ENCODE measurements at regions of chr2 and their contacts with region 1.

Region 1: DNA sequence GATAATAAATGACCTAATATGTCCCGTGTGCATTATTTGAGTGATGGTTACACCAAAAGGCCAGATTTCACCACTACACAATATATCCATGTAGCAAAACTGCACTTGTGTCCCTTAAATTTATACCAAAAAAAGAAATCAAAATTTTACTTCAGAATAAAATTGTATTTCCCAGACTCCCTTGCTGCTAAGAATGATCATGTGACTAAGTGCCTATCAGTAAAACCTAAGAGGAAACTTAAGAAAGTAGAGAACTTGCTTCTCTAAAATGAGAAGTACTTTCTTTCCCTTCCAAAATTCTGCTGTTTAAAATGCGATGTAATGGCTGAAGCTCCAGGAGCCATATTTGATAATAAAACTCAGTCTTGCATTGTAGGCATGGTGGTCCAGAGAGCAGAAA is 24.0 kb downstream of the PROKR1 start:
- DNase-seq: no peak
- H3K4me3 ChIP-seq: no peak overlapping the region
- H3K27ac ChIP-seq: no peak overlapping the region
- H3K4me1 ChIP-seq: no peaks in the 10 kb centered on the region
- H3K27me3 ChIP-seq: no peaks in the 10 kb centered on the region
- CTCF ChIP-seq: no peak
- POLR2A ChIP-seq: no peak

Region 2: DNA sequence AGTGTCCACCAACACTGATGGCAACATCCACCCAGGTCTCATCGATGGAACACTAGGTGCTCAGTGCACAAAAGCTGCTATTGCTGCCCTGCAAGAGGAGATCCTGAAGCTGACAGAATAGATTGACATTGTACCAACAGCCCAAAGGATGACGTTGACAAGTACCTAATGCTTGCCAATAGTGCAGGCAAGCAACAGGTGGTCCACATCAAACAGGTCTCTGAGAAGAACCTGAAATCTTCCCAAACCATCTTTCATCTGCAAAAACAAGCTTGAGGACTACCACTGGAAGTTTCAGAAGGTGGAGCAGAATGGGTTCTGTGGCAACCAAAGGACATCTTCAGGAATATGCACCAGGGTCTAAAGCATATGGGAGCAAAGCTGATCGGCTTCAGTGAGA is 39.8 kb before region 1 on chr2:
- intact Hi-C with region 1: loop called (anchors 2 kb)
- DNase-seq: no peak
- H3K4me3 ChIP-seq: no peak overlapping the region
- H3K27ac ChIP-seq: no peak overlapping the region
- H3K4me1 ChIP-seq: no peaks in the 10 kb centered on the region
- H3K27me3 ChIP-seq: no peaks in the 10 kb centered on the region
- CTCF ChIP-seq: no peak
- POLR2A ChIP-seq: no peak

Region 3: DNA sequence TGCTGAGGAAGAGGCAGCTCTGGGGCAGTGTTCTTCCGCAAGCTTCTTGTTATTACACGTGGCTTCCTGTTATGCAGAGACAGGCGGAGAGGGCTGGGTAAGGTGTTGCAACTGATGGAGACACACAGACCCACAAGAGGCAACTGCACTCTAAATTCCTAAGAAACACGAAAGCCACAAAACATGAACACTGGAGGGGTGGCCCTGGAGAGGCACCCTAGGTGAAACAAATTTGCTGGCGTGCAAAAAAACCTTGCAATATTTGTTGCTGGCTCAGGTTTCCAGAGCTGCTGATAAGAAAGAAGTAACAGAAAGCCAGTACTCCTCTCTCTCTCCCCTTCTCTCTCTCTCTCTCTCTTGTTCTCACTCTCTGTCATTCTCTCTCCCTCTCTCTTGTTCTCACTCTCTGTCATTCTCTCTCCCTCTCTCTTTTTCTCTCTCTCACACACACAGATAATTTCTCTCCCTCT is 99.0 kb after region 1 on chr2:
- intact Hi-C with region 1: no loop called
- DNase-seq: no peak
- H3K4me3 ChIP-seq: no peak overlapping the region
- H3K27ac ChIP-seq: peak overlapping the region; percentile 17
- H3K4me1 ChIP-seq: peaks cover 35% of the 10 kb centered on the region
- H3K27me3 ChIP-seq: no peaks in the 10 kb centered on the region
- CTCF ChIP-seq: no peak
- POLR2A ChIP-seq: no peak

Region 4: GRCh38 chr2:70132244-70133126 is 1465.1 kb after region 1 on chr2:
- intact Hi-C with region 1: no loop called
- DNase-seq: no peak
- H3K4me3 ChIP-seq: peak overlapping the region; percentile 41 to 51
- H3K27ac ChIP-seq: peak overlapping the region; percentile 96
- H3K4me1 ChIP-seq: peaks cover 72% of the 10 kb centered on the region
- H3K27me3 ChIP-seq: no peaks in the 10 kb centered on the region
- CTCF ChIP-seq: no peak
- POLR2A ChIP-seq: peak in 1 of 2 donors; percentile 11

Measured in vagina (tissue), 2 donors.